ENCODE measurements at regions of chr7 and their contacts with region 1.

Region 1: DNA sequence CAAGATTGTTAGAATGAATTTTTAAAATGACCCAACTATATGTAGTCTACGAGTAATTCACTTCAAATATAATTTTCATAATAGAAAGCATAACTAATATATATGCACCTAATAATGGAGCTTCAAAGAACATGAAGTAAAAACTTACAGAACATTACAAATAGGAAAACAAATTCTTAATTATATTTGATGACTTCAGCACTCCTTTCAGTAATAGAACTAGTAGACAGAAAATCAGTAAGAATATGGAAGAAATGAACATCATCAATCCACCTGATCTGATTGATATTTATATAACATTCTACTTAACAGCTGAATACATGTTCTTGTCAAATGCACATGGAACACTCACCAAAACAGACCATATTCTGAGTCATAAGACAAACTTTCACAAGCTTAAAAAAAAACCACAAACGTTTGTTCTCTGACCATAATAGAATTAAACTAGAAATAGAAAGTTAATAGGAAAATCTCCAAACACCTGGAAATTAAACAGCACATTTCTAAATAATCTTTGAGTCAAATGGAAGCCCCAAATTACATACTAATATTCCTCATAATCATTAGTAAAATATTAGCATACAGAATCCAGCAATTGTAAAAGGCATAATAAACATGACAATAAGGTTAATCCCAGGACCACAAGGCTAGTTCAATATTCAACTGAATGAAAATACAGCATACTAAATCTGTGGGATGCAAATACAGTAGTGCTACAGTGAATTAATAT is 48.0 kb downstream of the BRAF start:
- DNase-seq: no peak
- ATAC-seq: no peak
- H3K4me3 ChIP-seq: no peak overlapping the region
- H3K4me3 Mint-ChIP-seq: no peak overlapping the region
- H3K27ac ChIP-seq: no peak overlapping the region
- H3K27ac Mint-ChIP-seq: no peak overlapping the region
- H3K4me1 ChIP-seq: peaks cover 0 to 3% of the 10 kb centered on the region in 2 donors
- H3K4me1 Mint-ChIP-seq: peaks cover 47% of the 10 kb centered on the region
- H3K27me3 ChIP-seq: no peaks in the 10 kb centered on the region
- H3K27me3 Mint-ChIP-seq: no peaks in the 10 kb centered on the region
- CTCF ChIP-seq: no peak

Region 2: DNA sequence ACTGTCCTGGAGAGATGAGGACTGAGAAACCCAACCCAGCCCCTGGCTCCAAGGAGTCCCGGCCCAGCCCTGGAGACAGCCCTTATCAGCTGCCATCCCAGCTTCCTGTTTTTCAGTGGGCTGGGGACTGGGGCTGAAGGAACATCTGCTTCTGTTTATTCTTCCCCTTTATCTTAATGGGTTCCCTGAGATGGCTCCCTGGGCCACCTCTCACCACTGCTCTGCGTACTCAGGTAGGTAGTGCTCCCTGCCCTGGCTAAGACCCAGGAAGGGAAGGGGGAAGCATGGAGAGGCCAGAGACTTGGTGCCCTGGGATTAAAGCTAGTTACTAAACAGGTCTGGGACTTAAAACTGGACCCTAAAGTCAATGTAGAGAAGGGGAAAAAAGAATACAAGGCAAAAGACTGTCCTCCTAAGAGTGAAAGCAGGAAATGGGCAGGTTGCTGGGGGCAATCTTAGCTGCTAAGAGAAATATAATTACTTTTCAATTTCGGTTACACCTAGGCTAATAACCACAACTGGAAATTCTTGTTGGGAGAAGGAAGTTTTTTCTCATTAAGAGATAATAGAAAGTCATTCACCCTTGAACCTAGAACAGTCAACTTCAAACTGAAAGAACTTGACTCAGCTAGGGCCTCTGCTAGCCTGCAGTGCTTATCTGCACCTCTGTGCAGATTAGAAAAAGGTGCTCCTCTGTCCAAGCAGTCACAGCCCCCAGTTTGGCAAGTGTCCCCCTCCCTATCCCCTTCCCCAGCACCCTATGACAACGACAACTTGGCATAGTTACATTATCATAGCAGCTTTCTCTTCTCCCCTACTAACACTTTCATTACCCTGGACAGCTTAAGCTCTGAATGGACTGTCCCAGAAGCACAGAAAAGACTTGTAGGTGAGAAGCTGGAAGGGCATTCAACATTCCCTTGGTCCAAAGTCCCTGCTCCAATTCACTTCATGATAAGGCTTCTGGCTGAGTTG is 634.3 kb before region 1 on chr7:
- CTCF ChIA-PET with region 1: no interaction called
- POLR2A ChIA-PET with region 1: no interaction called
- intact Hi-C with region 1: no loop called
- DNase-seq: peak; percentile 44
- ATAC-seq: peak; percentile 57
- H3K4me3 ChIP-seq: no peak overlapping the region
- H3K4me3 Mint-ChIP-seq: peak overlapping the region; percentile 20
- H3K27ac ChIP-seq: peak overlapping the region in 1 of 2 donors; percentile 14
- H3K27ac Mint-ChIP-seq: peak overlapping the region; percentile 69
- H3K4me1 ChIP-seq: peaks cover 15 to 26% of the 10 kb centered on the region in 2 donors
- H3K4me1 Mint-ChIP-seq: peaks cover 16% of the 10 kb centered on the region
- H3K27me3 ChIP-seq: no peaks in the 10 kb centered on the region
- H3K27me3 Mint-ChIP-seq: no peaks in the 10 kb centered on the region
- CTCF ChIP-seq: no peak

Region 3: DNA sequence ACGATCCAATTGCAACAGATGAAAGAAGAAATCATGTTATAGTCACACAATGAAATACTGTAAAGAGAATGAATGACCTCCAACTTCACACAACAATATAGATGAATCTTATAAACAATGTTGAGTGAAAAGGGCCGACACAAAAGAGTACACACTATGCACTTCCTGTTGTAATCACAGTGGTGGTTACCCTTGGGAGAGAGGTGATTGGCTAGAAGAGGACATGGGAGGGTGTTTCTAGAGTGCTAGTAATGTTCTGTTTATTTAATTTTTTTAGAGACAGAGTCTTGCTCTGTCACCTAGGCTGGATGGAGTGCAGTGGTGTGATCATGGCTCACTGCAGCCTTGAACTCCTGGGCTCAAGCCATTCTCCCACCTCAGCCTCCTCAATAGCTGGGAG is 97.7 kb before region 1 on chr7:
- CTCF ChIA-PET with region 1: no interaction called
- POLR2A ChIA-PET with region 1: no interaction called
- intact Hi-C with region 1: no loop called
- DNase-seq: no peak
- ATAC-seq: no peak
- H3K4me3 ChIP-seq: no peak overlapping the region
- H3K4me3 Mint-ChIP-seq: no peak overlapping the region
- H3K27ac ChIP-seq: no peak overlapping the region
- H3K27ac Mint-ChIP-seq: no peak overlapping the region
- H3K4me1 ChIP-seq: no peaks in the 10 kb centered on the region
- H3K4me1 Mint-ChIP-seq: no peaks in the 10 kb centered on the region
- H3K27me3 ChIP-seq: no peaks in the 10 kb centered on the region
- H3K27me3 Mint-ChIP-seq: no peaks in the 10 kb centered on the region
- CTCF ChIP-seq: no peak

Region 4: GRCh38 chr7:140889645-140890044 is 13.0 kb after region 1 on chr7:
- CTCF ChIA-PET with region 1: no interaction called
- POLR2A ChIA-PET with region 1: no interaction called
- intact Hi-C with region 1: loop called (anchors 1 kb)
- DNase-seq: no peak
- ATAC-seq: no peak
- H3K4me3 ChIP-seq: no peak overlapping the region
- H3K4me3 Mint-ChIP-seq: no peak overlapping the region
- H3K27ac ChIP-seq: no peak overlapping the region
- H3K27ac Mint-ChIP-seq: no peak overlapping the region
- H3K4me1 ChIP-seq: peaks cover 7 to 31% of the 10 kb centered on the region in 2 donors
- H3K4me1 Mint-ChIP-seq: peaks cover 68% of the 10 kb centered on the region
- H3K27me3 ChIP-seq: no peaks in the 10 kb centered on the region
- H3K27me3 Mint-ChIP-seq: no peaks in the 10 kb centered on the region
- CTCF ChIP-seq: no peak

Region 5: DNA sequence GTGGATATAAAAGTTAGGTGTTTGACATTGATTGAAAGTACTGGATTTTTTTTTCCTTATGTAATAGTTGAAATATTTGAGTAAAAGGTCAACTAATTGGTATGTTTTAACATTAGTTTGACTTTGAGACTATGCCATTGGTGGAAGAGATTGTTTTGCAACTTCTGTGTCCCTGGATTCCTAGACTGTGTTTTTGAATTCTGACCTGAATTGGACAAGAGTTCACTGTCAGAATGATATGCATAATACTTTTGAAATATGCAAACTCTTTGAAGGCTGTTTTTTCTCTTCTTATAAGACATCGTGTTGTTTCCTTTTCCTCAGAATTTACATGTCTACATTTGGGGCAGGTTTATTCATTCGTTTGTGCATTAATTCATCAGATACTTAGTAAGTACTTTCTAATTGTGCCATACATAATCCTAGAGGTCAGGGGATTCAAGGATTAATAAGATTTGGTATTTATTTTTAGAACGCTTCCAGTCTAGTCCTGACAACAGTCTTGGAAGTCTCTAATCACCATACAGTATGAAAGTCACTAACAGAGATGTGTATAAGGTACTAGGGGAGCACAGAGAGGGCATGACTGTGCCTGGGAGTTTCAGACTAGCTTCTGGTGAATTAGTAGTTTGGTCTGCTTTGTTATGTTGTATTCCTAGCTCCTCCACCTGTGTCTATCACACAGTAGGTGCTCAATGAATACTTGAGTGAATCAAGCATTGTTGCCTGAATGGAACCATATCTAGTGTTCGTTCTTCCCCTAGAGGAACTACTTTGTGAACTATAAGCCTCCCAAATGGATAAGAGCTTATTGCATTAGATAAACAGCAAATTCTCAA is 723.7 kb after region 1 on chr7:
- CTCF ChIA-PET with region 1: no interaction called
- POLR2A ChIA-PET with region 1: no interaction called
- intact Hi-C with region 1: no loop called
- DNase-seq: no peak
- ATAC-seq: no peak
- H3K4me3 ChIP-seq: no peak overlapping the region
- H3K4me3 Mint-ChIP-seq: no peak overlapping the region
- H3K27ac ChIP-seq: no peak overlapping the region
- H3K27ac Mint-ChIP-seq: no peak overlapping the region
- H3K4me1 ChIP-seq: no peaks in the 10 kb centered on the region
- H3K4me1 Mint-ChIP-seq: no peaks in the 10 kb centered on the region
- H3K27me3 ChIP-seq: no peaks in the 10 kb centered on the region
- H3K27me3 Mint-ChIP-seq: no peaks in the 10 kb centered on the region
- CTCF ChIP-seq: no peak

Measured in B cell (primary cell).